Psoas muscle (tissue), 8 donors: ENCODE measurements at regions of chr6 and their contacts with region 1.

Region 1: GRCh38 chr6:128323011-128323410 is 197.4 kb downstream of the PTPRK start:
- DNase-seq: no peak
- ATAC-seq: no peak
- H3K4me3 ChIP-seq: no peak overlapping the region
- H3K27ac ChIP-seq: no peak overlapping the region
- H3K4me1 ChIP-seq: no peaks in the 10 kb centered on the region
- H3K27me3 ChIP-seq: no peaks in the 10 kb centered on the region
- CTCF ChIP-seq: no peak

Region 2: DNA sequence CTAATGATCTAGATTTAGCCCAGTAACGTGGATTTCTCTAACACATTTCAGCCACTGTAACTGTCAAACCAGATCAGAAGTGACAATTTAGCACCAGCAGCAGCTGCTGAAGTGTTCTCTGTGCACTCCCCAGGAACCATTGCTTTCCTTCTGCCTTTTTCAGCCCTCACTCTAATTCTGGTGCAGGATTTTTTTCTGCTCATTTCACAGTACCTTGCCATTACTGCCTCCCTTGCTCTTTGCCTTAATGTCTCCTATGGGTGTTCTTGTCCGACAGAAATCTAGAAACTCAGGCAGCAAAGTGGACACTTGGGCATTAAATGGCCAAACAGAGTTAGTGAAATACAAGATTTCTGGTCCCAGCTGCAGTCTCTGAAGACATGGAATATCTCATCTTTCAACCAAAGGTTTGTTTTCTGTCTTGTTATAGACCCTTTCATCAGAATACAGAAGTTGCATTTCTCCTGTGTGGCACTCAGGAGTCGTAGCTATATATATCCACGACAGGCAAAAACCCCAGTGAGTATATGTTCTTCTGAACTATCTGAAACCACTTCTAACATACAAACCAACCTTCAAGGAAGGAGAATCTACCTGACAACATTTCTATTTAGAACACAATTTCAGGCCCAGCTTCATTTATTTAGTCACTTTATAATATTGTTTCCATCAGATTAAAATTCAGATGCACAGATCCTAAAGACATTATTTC is 515.0 kb before region 1 on chr6:
- intact Hi-C with region 1: loop called in 1 of 2 experiments (anchors 5 kb)
- DNase-seq: no peak
- ATAC-seq: no peak
- H3K4me3 ChIP-seq: no peak overlapping the region
- H3K27ac ChIP-seq: no peak overlapping the region
- H3K4me1 ChIP-seq: no peaks in the 10 kb centered on the region
- H3K27me3 ChIP-seq: peaks cover 0 to 3% (median 0%) of the 10 kb centered on the region in 3 donors
- CTCF ChIP-seq: no peak

Region 3: DNA sequence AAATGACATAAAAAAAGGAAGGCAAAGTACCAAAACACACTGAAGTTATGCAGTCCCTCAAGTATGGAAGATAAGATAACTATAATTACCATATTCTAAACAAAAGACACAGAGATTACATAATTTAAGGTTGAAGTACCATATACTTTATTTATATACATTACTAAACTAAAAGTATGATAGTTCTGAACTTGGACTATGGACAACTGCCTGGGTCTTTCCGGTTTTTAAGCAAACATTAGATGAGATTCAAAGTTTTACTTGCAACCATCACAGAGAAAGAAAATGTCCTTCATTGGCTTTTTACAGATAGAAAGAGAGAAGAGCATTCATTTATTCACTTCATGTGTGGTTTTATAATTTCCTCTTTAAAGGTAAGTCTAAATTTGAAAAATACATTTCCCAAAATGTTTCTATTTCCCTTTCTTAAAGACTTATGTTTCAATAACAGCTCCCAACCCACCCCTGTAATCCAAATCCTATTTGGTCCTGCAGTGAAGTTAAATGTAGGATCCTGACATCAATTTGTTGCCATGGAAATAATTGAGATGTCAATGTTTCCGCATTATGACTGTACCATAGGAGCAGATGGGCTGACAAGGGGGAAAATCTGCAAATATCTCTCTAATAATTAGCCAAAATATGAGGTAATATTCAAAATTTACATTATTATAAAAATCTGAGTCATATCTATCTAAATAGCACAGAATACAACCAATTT is 133.7 kb after region 1 on chr6:
- intact Hi-C with region 1: no loop called
- DNase-seq: no peak
- ATAC-seq: no peak
- H3K4me3 ChIP-seq: no peak overlapping the region
- H3K27ac ChIP-seq: no peak overlapping the region
- H3K4me1 ChIP-seq: no peaks in the 10 kb centered on the region
- H3K27me3 ChIP-seq: no peaks in the 10 kb centered on the region
- CTCF ChIP-seq: no peak

Region 4: DNA sequence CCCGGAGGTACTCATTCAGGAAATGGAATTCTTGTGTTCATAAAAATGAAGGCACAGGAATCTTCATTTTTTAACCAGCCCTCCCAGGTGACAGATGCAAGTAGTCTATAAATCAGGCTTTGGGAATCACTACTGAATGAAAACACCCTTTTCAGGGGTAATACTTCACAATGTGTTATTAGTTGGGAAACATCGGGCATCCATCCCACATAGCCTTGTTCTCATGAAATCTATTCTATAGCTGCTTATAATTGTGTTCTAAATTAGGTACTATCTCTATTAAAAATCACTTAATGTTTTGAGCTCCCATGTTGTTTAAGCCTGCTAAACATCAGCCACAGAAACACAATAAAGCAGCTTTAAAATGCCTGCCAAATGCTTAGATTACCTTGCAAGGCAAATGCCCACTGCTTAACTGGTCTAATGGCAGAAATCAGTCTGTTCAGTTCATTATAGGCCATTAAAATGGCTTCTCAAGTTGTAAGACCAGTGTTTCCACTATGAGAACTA is 1790.2 kb after region 1 on chr6:
- intact Hi-C with region 1: loop called in 1 of 2 experiments (anchors 5 kb)
- DNase-seq: no peak
- ATAC-seq: no peak
- H3K4me3 ChIP-seq: no peak overlapping the region
- H3K27ac ChIP-seq: no peak overlapping the region
- H3K4me1 ChIP-seq: no peaks in the 10 kb centered on the region
- H3K27me3 ChIP-seq: no peaks in the 10 kb centered on the region
- CTCF ChIP-seq: no peak